Ovary (tissue), 10 donors: ENCODE measurements at regions of chr9 and their contacts with region 1.

Region 1: GRCh38 chr9:72599879-72600534 is 78.6 kb downstream of the TMC1 start:
- DNase-seq: no peak
- H3K4me3 ChIP-seq: no peak overlapping the region
- H3K27ac ChIP-seq: no peak overlapping the region
- H3K4me1 ChIP-seq: peaks cover 2% of the 10 kb centered on the region
- H3K27me3 ChIP-seq: no peaks in the 10 kb centered on the region
- CTCF ChIP-seq: no peak
- EP300 ChIP-seq: no peak
- POLR2A ChIP-seq: no peak

Region 2: GRCh38 chr9:71582347-71582746 is 1017.7 kb before region 1 on chr9:
- intact Hi-C with region 1: loop called in 1 of 4 experiments (anchors 5 kb)
- DNase-seq: no peak
- H3K4me3 ChIP-seq: no peak overlapping the region
- H3K27ac ChIP-seq: no peak overlapping the region
- H3K4me1 ChIP-seq: no peaks in the 10 kb centered on the region
- H3K27me3 ChIP-seq: no peaks in the 10 kb centered on the region
- CTCF ChIP-seq: no peak
- EP300 ChIP-seq: no peak
- POLR2A ChIP-seq: no peak

Region 3: GRCh38 chr9:72396247-72397091 is 203.5 kb before region 1 on chr9:
- intact Hi-C with region 1: no loop called
- DNase-seq: no peak
- H3K4me3 ChIP-seq: no peak overlapping the region
- H3K27ac ChIP-seq: no peak overlapping the region
- H3K4me1 ChIP-seq: peaks cover 4% of the 10 kb centered on the region
- H3K27me3 ChIP-seq: no peaks in the 10 kb centered on the region
- CTCF ChIP-seq: no peak
- EP300 ChIP-seq: no peak
- POLR2A ChIP-seq: no peak

Region 4: DNA sequence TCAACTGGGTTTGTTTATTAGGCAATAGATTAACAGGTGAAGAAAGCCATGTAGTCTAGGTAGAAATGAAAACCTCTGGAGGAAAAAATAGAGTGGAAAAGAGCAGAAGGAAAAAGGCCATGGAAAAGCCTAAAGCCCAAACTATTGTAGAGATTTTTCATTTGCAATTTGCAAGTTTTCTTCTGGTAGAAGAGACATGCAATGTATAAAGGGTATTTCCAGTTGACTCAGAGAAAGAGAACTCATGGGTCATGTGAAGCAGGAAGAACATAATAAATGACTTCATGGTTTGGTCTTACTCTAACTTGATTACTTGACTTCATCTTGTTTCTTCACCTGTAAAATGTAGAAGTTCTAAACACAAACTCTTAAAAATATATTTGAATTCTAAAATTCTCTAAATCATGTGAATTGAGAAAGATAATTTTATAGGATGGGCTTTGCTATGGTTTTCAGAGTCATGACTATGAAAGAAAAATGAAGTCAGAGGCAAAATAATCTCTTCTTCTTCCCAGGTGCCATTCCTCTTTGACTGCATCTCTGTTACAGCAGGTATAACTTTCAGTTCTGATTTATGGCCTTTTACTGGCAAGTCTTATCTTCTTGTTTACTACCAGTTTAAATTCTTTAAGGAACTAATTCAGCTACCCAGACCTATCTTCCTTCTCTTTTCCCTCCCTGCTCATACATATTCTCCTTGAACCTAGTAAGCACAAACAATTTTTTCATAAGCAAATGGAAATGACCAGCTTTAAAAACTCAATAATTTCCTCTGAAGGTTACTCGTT is 126.3 kb before region 1 on chr9:
- intact Hi-C with region 1: no loop called
- DNase-seq: no peak
- H3K4me3 ChIP-seq: no peak overlapping the region
- H3K27ac ChIP-seq: peak overlapping the region in 1 of 2 donors; percentile 2
- H3K4me1 ChIP-seq: no peaks in the 10 kb centered on the region
- H3K27me3 ChIP-seq: no peaks in the 10 kb centered on the region
- CTCF ChIP-seq: no peak
- EP300 ChIP-seq: no peak
- POLR2A ChIP-seq: no peak

Region 5: GRCh38 chr9:72509635-72510034 is 90.4 kb before region 1 on chr9:
- intact Hi-C with region 1: no loop called
- DNase-seq: no peak
- H3K4me3 ChIP-seq: no peak overlapping the region
- H3K27ac ChIP-seq: no peak overlapping the region
- H3K4me1 ChIP-seq: no peaks in the 10 kb centered on the region
- H3K27me3 ChIP-seq: no peaks in the 10 kb centered on the region
- CTCF ChIP-seq: no peak
- EP300 ChIP-seq: no peak
- POLR2A ChIP-seq: no peak